ENCODE measurements at regions of chr1 and their contacts with region 1.

Region 1: GRCh38 chr1:8314346-8315280 is 3.3 kb upstream of the SLC45A1 start:
- DNase-seq: peak; percentile 78 to 80
- ATAC-seq: peak; percentile 87 to 89
- H3K4me3 ChIP-seq: no peak overlapping the region
- H3K27ac ChIP-seq: peak overlapping the region; percentile 90 to 92
- H3K4me1 ChIP-seq: peaks cover 38% of the 10 kb centered on the region
- CTCF ChIP-seq: peak; percentile 76
- EP300 ChIP-seq: no peak
- POLR2A ChIP-seq: no peak
- RAD21 ChIP-seq: peak; percentile 99

Region 2: GRCh38 chr1:7869136-7869905 is 445.3 kb before region 1 on chr1:
- CTCF ChIA-PET with region 1: no interaction called
- POLR2A ChIA-PET with region 1: no interaction called
- DNase-seq: no peak
- ATAC-seq: no peak
- H3K4me3 ChIP-seq: no peak overlapping the region
- H3K27ac ChIP-seq: no peak overlapping the region
- H3K4me1 ChIP-seq: no peaks in the 10 kb centered on the region
- CTCF ChIP-seq: no peak
- EP300 ChIP-seq: no peak
- POLR2A ChIP-seq: no peak
- RAD21 ChIP-seq: no peak

Region 3: GRCh38 chr1:8004803-8005554 is 309.6 kb before region 1 on chr1:
- CTCF ChIA-PET with region 1: interaction called, 172 read pairs
- POLR2A ChIA-PET with region 1: no interaction called
- DNase-seq: peak; percentile 66 to 95
- ATAC-seq: peak; percentile 81 to 91
- H3K4me3 ChIP-seq: peak overlapping the region; percentile 15; the same call in 1 of the 3 replicates
- H3K27ac ChIP-seq: peak overlapping the region; percentile 93 to 94
- H3K4me1 ChIP-seq: peaks cover 53% of the 10 kb centered on the region
- CTCF ChIP-seq: no peak
- EP300 ChIP-seq: peak; percentile 82 to 90; a peak in 4 of 5 replicates
- POLR2A ChIP-seq: no peak
- RAD21 ChIP-seq: peak in 1 of 2 experiments; percentile 31; a peak in 1 of 5 replicates

Region 4: DNA sequence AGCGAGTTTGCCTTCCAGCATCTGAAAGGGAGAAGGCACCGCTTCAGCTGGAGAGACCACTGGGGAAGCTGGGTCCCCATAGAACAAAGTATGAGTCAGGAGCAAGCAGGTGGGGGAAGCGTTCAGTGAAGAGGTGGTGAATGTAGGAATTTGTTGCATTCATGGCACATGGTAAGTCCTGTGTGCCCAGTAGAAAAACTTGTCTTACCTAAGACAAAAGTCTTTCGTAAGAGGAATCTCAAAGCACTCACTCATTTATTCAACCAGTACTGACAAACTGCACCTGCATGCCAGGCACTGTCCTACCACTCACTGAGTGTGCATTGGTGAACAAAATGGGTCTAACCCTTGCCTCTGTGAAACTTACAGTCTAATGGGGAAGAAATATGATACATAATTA is 279.3 kb before region 1 on chr1:
- CTCF ChIA-PET with region 1: interaction called, 52 read pairs
- POLR2A ChIA-PET with region 1: no interaction called
- DNase-seq: no peak
- ATAC-seq: no peak; a peak in 1 of 6 replicates
- H3K4me3 ChIP-seq: no peak overlapping the region
- H3K27ac ChIP-seq: peak overlapping the region; percentile 77 to 100
- H3K4me1 ChIP-seq: peaks cover 30% of the 10 kb centered on the region
- CTCF ChIP-seq: no peak
- EP300 ChIP-seq: no peak
- POLR2A ChIP-seq: no peak
- RAD21 ChIP-seq: no peak

Region 5: DNA sequence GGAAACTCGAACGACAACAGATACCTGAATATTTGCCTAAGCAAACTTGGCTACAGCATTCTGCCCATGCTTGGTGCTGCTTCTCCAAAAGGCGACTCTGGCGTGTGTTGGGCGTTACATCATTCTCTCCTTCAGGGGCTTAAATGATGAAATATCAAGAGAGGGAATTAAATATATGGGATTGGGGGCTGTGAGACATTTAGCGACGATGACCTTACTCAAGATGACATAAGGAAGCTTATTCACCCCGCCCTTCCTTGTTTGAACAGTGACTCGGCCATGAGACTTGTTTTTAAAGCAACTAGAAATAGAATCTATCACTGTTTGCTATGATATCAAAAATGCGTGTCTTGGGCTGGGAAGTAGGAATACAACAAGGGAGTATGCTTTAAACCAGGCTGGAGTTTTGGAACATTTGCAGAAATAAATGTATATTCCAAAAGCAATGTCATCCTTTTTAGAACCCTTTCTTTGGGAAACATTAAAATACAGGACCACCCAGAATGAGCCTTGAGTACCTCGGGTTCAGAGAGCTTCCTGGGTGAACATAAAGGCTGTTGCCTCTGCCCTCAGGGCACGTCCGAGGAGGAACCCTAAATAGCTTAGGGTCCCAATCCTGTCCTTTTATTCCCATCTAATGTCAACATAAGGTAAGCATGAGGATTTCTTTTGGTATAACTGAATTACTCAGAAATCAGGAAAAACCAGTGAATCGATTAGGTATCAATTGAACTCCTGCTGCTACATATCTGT is 120.0 kb before region 1 on chr1:
- CTCF ChIA-PET with region 1: interaction called, 10 read pairs
- POLR2A ChIA-PET with region 1: no interaction called
- DNase-seq: peak; percentile 82 to 96
- ATAC-seq: peak; percentile 82 to 88
- H3K4me3 ChIP-seq: no peak overlapping the region
- H3K27ac ChIP-seq: peak overlapping the region; percentile 95 to 98
- H3K4me1 ChIP-seq: peaks cover 57% of the 10 kb centered on the region
- CTCF ChIP-seq: no peak
- EP300 ChIP-seq: peak; percentile 97 to 98
- POLR2A ChIP-seq: no peak
- RAD21 ChIP-seq: peak; percentile 3 to 71; a peak in 4 of 5 replicates

Region 6: GRCh38 chr1:8218361-8219092 is 96.1 kb before region 1 on chr1:
- CTCF ChIA-PET with region 1: no interaction called
- POLR2A ChIA-PET with region 1: no interaction called
- DNase-seq: no peak
- ATAC-seq: no peak
- H3K4me3 ChIP-seq: no peak overlapping the region
- H3K27ac ChIP-seq: peak overlapping the region; percentile 64 to 95; a peak in 5 of 6 replicates
- H3K4me1 ChIP-seq: peaks cover 32% of the 10 kb centered on the region
- CTCF ChIP-seq: no peak
- EP300 ChIP-seq: no peak
- POLR2A ChIP-seq: no peak
- RAD21 ChIP-seq: no peak

Region 7: GRCh38 chr1:8302081-8302956 is 12.3 kb before region 1 on chr1:
- CTCF ChIA-PET with region 1: interaction called, 20 read pairs
- POLR2A ChIA-PET with region 1: no interaction called
- DNase-seq: no peak
- ATAC-seq: no peak; a peak in 1 of 6 replicates
- H3K4me3 ChIP-seq: no peak overlapping the region
- H3K27ac ChIP-seq: 0 out of 6 replicates have a peak overlapping the region, but pooled peaks of 1 of the 2 experiments have one; percentile 4
- H3K4me1 ChIP-seq: no peaks in the 10 kb centered on the region
- CTCF ChIP-seq: no peak
- EP300 ChIP-seq: no peak
- POLR2A ChIP-seq: no peak
- RAD21 ChIP-seq: no peak

Region 8: GRCh38 chr1:8384577-8384976 is 70.0 kb after region 1 on chr1:
- CTCF ChIA-PET with region 1: no interaction called
- POLR2A ChIA-PET with region 1: no interaction called
- DNase-seq: no peak
- ATAC-seq: no peak
- H3K4me3 ChIP-seq: no peak overlapping the region
- H3K27ac ChIP-seq: no peak overlapping the region
- H3K4me1 ChIP-seq: no peaks in the 10 kb centered on the region
- CTCF ChIP-seq: no peak
- EP300 ChIP-seq: no peak
- POLR2A ChIP-seq: no peak
- RAD21 ChIP-seq: no peak

Measured in A549 (cell line).